ENCODE measurements at regions of chr5 and their contacts with region 1.

Region 1: DNA sequence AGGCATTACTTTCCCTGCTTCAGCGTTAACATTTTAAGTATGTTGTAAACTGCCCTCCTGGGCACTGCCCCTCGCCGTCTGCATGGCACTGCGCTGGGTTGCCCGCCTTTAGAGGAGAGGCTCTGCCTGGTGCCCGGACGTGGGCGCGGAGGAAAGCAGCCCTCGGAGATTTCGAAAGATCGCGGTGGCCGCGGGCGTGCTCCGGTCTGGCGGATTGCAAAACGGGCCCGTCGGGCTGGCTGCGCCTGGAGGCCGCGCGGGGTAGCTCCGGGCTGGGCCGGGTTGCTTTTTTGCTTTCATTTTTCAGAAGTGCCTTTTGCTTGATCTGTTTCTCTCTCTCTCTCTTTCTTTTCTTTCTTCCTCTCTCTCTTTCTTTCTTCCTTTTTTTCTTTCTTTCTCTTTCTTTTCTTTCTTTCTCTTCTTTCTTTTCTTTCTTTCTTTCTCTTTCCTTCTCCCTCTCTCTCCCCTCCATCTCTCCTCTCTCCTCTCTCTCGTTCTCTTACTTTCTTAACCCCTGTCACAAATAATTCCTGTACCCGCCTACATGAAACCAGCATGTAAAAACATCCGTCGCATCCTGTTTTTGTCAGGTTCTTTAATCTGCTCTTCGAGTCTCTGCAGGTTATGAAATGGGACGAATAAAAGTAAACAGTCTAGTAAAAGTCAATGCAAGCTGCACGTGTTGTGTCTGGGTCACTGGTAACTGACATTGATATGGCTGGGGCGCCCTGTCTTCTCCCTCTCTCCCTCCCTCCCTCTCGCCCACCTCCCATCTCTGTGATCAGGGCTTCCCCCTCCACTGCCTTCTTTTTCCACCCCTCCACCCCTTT is 1.7 kb downstream of the FST start:
- DNase-seq: peak in 1 of 2 donors; percentile 72
- ATAC-seq: peak; percentile 40 to 67
- H3K4me3 ChIP-seq: peak overlapping the region; percentile 69 to 71 (median 70)
- H3K27ac ChIP-seq: peak overlapping the region; percentile 32 to 70 (median 52)
- H3K4me1 ChIP-seq: peaks cover 13 to 21% of the 10 kb centered on the region in 2 donors
- H3K27me3 ChIP-seq: no peaks in the 10 kb centered on the region
- CTCF ChIP-seq: peak in 4 of 5 experiments; percentile 21 to 48 (median 34)
- POLR2A ChIP-seq: no peak

Region 2: DNA sequence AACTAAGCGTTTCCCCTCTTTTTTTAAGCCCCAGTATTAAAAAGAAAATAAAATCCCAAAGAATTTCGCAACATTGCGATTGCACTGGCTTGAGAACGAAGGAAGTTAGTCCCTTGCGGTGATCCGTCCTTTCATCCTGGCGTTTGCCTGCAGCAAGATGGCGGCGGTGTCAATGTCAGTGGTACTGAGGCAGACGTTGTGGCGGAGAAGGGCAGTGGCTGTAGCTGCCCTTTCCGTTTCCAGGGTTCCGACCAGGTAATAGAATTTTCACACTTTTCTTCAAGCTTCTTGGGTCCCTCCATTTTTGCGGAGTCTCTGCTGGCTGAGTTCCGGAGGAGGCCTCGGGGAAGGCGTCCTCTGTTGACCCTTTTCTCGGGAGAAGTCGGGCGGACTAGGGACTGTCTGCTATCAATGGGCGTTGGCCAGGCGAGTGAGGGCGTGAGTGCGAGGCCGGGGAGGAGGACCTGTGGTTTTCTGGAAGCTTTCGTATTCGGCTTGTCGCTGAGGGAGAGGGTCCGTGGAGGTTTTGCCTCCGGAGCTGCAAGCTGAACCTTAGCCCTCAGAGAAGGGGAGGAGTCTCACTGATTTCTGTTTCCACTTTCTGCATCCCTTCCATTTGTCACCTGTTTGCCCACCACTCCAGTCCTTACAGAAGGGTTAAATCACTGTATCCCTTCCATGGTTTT is 78.5 kb after region 1 on chr5 and contains the start of gene NDUFS4:
- in situ Hi-C with region 1: no loop called
- intact Hi-C with region 1: loop called (anchors 5 kb)
- DNase-seq: peak; percentile 76 to 83
- ATAC-seq: peak; percentile 98
- H3K4me3 ChIP-seq: peak within 1 kb of the TSS; percentile 81 to 94 (median 91)
- H3K27ac ChIP-seq: peak within 1 kb of the TSS; percentile 89 to 94 (median 93)
- H3K4me1 ChIP-seq: peaks cover 35 to 45% of the 10 kb centered on the region in 2 donors
- H3K27me3 ChIP-seq: no peaks in the 10 kb centered on the region
- CTCF ChIP-seq: no peak
- POLR2A ChIP-seq: peak; percentile 55 to 71
- total RNA-seq, gene NDUFS4: 116 to 170 (median 145) TPM

Region 3: GRCh38 chr5:53671447-53671846 is 189.3 kb after region 1 on chr5:
- in situ Hi-C with region 1: no loop called
- intact Hi-C with region 1: no loop called
- DNase-seq: no peak
- ATAC-seq: no peak
- H3K4me3 ChIP-seq: no peak overlapping the region
- H3K27ac ChIP-seq: no peak overlapping the region
- H3K4me1 ChIP-seq: no peaks in the 10 kb centered on the region
- H3K27me3 ChIP-seq: no peaks in the 10 kb centered on the region
- CTCF ChIP-seq: no peak
- POLR2A ChIP-seq: no peak

Region 4: DNA sequence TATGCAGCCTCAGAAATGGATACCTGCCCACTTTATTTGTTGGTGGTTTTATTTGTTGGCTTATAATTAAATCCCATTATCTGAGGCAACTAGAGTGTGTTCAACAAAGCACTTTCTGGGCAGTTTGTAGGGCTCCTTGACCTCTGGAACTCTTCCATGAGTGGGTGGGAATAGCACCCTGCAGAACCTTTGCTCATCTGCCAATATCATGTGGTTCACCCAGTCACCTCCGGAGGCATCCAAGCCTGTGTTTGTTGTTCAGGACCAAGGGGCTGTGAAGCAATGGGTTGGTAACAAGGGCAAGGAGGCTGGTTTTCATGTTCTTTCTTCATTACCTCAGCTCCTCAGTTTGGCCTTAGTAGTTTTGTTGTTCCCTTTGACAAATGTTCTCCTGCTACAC is 392.3 kb after region 1 on chr5:
- in situ Hi-C with region 1: no loop called
- intact Hi-C with region 1: loop called (anchors 2 kb)
- DNase-seq: no peak
- ATAC-seq: no peak
- H3K4me3 ChIP-seq: no peak overlapping the region
- H3K27ac ChIP-seq: no peak overlapping the region
- H3K4me1 ChIP-seq: no peaks in the 10 kb centered on the region
- H3K27me3 ChIP-seq: no peaks in the 10 kb centered on the region
- CTCF ChIP-seq: no peak
- POLR2A ChIP-seq: no peak

Region 5: GRCh38 chr5:53991942-53992341 is 509.8 kb after region 1 on chr5:
- in situ Hi-C with region 1: no loop called
- intact Hi-C with region 1: loop called (anchors 10 kb)
- DNase-seq: no peak
- ATAC-seq: no peak
- H3K4me3 ChIP-seq: no peak overlapping the region
- H3K27ac ChIP-seq: no peak overlapping the region
- H3K4me1 ChIP-seq: no peaks in the 10 kb centered on the region
- H3K27me3 ChIP-seq: no peaks in the 10 kb centered on the region
- CTCF ChIP-seq: peak in 4 of 5 experiments; percentile 12 to 38 (median 20)
- POLR2A ChIP-seq: no peak